ENCODE measurements at regions of chr15 and their contacts with region 1.

Region 1: GRCh38 chr15:80758130-80758745 is 20.9 kb upstream of the CEMIP start:
- DNase-seq: no peak
- H3K27ac ChIP-seq: no peak overlapping the region
- CTCF ChIP-seq: no peak

Region 2: DNA sequence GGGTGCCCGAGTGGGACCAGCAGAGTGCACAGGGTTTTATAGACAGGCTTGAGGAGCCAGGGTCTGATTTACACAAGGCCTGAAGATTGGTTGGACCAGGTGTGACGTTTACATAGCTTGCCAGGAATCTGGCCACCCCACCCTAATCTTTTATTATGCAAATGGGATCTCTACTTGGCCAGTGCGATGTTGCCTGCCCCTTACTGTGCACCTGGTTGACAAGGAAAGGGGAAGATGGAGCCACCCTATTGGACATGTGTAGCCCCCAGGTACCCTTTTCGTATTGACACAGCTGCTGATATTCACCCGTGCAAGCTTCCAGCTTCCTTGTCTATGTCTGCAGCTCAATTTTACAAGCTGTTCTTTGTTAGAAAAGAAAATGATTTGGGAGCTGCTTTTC is 222.0 kb before region 1 on chr15:
- CTCF ChIA-PET with region 1: no interaction called
- POLR2A ChIA-PET with region 1: no interaction called
- DNase-seq: no peak
- H3K27ac ChIP-seq: no peak overlapping the region
- CTCF ChIP-seq: no peak

Region 3: DNA sequence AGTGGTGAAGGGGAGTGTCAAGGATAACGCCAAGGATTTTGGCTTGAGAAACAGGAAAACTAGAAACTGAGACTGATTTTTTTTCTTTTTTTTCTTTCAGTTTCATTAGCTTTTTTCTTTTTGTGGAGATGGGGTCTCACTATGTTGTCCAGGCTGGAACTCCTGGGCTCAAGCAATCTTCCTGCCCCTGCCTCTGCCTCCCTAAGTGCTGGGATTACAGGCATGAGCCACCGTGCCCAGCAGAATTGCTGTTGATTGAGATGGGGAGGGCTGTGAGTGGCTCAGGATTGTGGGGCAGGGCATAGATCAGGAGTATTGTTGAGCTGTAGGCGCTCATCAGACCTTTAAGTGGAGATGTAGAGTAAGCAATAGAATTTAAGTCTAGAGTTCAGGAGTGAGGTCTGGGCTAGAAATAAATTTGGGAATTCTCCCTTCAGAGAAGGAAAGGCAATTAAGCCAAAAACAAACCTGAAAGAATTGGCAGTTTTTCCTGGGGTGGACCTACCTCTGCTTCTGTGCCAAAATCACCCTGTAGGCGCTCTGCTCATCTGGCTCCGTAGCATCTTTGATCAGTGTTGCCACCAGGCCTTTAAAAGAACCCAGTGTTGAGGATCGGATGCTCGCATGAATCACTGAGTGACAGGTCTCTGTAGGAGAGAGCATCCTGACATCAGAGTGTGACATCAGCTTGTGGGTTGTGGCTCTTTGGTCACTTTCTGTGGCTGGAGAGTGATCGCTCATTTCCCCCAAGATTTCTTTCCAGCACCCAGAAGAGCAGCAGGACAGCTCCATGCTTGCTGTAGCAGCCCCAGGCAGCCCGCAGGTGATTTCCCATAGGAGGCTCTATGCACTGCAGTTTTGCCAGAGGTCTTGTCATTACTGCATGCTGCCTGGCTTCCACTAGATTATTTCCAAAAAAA is 47.3 kb before region 1 on chr15:
- CTCF ChIA-PET with region 1: no interaction called
- POLR2A ChIA-PET with region 1: no interaction called
- DNase-seq: no peak
- H3K27ac ChIP-seq: peak overlapping the region; percentile 14; the same call in 1 of the 2 replicates
- CTCF ChIP-seq: no peak

Region 4: GRCh38 chr15:80977627-80978036 is 219.4 kb after region 1 on chr15:
- CTCF ChIA-PET with region 1: interaction called, 10 read pairs
- POLR2A ChIA-PET with region 1: no interaction called
- DNase-seq: no peak
- H3K27ac ChIP-seq: no peak overlapping the region
- CTCF ChIP-seq: no peak